H1 (cell line): ENCODE measurements at regions of chr3 and their contacts with region 1.

Region 1: DNA sequence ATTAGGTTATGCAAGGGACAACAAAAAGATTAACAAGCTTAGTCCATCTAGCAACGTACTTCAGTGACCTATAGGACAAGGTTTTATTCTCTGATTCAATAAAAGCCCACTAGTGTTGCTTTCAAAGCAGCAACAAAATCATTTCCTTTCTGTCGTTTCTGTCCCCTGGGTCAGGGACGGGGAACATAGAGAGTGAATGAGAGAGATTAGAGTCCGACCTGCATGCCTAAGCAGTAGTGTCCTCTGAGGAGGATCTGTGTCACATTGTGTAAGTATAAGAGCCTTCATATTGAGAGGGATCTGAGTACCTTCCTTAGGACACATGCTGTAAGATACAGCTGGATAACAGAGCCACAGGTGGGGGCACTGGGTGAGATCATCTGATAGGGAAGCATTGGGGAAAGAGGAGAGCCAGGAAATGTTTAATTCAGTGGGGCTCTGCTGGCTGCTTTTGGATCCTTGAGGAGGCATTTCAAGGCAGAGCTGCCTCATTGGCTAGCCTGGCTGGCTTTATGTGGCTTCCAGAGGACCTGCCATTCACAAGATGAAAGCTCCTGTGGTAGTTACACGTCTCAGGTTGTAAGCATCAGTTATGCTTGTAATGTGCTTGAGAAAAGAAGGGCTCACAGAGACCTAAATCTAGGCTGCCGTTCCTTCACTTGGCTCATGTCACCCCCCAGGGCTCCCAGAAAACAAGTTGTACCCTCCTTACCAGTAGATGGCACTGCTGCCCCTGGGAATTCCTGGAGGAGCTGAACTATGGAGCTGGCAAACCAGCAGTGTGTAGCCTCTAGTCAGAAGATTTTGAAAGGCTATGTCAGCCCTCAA is 2.7 kb downstream of the TMEM108 start:
- DNase-seq: peak; percentile 47 to 87
- H3K4me3 ChIP-seq: no peak overlapping the region
- H3K27ac ChIP-seq: no peak overlapping the region
- H3K4me1 ChIP-seq: peaks cover 0 to 8% (median 7%) of the 10 kb centered on the region in 4 experiments; a peak in 4 of 7 replicates
- H3K27me3 ChIP-seq: peaks cover 0 to 18% (median 9%) of the 10 kb centered on the region in 4 experiments; a peak in 5 of 7 replicates
- CTCF ChIP-seq: peak; percentile 60 to 92 (median 89)
- EP300 ChIP-seq: no peak
- POLR2A ChIP-seq: no peak
- RAD21 ChIP-seq: peak; percentile 96 to 97

Region 2: GRCh38 chr3:133054571-133054970 is 13.7 kb after region 1 on chr3:
- CTCF ChIA-PET with region 1: interaction called, 28 read pairs
- POLR2A ChIA-PET with region 1: no interaction called
- DNase-seq: no peak
- H3K4me3 ChIP-seq: no peak overlapping the region
- H3K27ac ChIP-seq: no peak overlapping the region; the same call in 1 of the 2 replicates
- H3K4me1 ChIP-seq: peaks cover 0 to 7% (median 5%) of the 10 kb centered on the region in 4 experiments; a peak in 4 of 7 replicates
- H3K27me3 ChIP-seq: no peaks in the 10 kb centered on the region
- CTCF ChIP-seq: no peak
- EP300 ChIP-seq: no peak
- POLR2A ChIP-seq: no peak
- RAD21 ChIP-seq: no peak

Region 3: DNA sequence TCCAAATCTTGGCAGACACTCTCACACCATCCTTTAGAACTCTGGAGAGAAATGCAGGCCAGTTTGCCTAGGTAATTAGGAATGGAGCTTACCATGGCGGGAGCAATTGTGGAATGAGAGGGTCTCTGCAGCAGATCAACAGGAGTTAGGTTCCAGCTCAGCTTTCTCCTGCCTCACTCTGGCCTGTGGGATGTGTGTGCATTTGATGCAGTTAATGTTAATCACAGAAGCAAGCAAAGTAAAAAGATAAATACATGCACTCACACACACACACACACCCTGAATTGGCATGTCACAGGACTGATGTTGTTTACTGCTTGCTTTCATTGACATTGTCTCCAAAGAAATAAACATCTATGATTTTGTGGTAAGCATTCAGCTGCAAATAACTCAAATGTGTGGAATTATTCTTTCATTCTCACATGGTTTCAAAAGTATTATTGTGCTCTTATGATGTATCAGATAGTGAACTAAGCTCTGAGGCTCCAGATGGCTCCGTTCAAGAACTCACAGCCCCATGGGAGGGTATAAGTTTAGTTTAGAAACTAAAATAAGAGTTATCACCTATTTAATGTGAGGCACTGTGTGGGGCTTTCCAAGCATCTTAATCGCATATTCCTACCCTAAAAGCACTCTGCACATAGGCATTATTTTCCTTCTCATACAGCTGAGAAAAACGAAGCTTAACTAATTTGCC is 327.6 kb after region 1 on chr3:
- CTCF ChIA-PET with region 1: interaction called, 28 read pairs
- POLR2A ChIA-PET with region 1: no interaction called
- DNase-seq: peak in 1 of 2 experiments; percentile 6
- H3K4me3 ChIP-seq: no peak overlapping the region
- H3K27ac ChIP-seq: no peak overlapping the region
- H3K4me1 ChIP-seq: no peaks in the 10 kb centered on the region
- H3K27me3 ChIP-seq: peaks cover 0 to 1% (median 0%) of the 10 kb centered on the region in 4 experiments; a peak in 1 of 7 replicates
- CTCF ChIP-seq: no peak
- EP300 ChIP-seq: no peak
- POLR2A ChIP-seq: no peak
- RAD21 ChIP-seq: no peak

Region 4: GRCh38 chr3:133384331-133385027 is 343.6 kb after region 1 on chr3:
- CTCF ChIA-PET with region 1: interaction called, 173 read pairs
- POLR2A ChIA-PET with region 1: interaction called, 5 read pairs
- DNase-seq: peak; percentile 58 to 80
- H3K4me3 ChIP-seq: no peak overlapping the region
- H3K27ac ChIP-seq: no peak overlapping the region
- H3K4me1 ChIP-seq: no peaks in the 10 kb centered on the region; a peak in 1 of 7 replicates
- H3K27me3 ChIP-seq: no peaks in the 10 kb centered on the region
- CTCF ChIP-seq: peak; percentile 86 to 97 (median 93)
- EP300 ChIP-seq: no peak
- POLR2A ChIP-seq: no peak
- RAD21 ChIP-seq: peak; percentile 97 to 98

Region 5: DNA sequence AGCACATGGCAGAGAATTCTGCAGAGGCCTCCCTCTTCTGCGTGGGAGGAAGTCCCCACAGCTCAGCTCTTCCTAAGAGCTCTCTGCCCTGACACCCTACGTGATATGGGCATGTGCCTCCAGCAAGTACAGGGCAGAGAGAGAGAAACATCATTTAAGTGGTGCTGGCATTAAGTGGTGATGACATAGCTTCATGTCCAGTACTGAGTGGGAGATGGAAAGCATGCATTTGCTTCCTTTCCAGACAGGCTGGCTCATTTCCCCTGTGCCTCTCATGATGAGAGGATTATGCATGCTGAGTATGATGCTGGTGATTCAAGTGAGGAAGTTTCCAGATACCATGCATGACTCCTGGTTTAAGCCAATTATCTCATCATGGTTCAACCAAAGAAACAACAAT is 385.8 kb after region 1 on chr3:
- CTCF ChIA-PET with region 1: interaction called, 14 read pairs
- POLR2A ChIA-PET with region 1: no interaction called
- DNase-seq: no peak
- H3K4me3 ChIP-seq: no peak overlapping the region
- H3K27ac ChIP-seq: no peak overlapping the region
- H3K4me1 ChIP-seq: no peaks in the 10 kb centered on the region
- H3K27me3 ChIP-seq: no peaks in the 10 kb centered on the region
- CTCF ChIP-seq: no peak
- EP300 ChIP-seq: no peak
- POLR2A ChIP-seq: no peak
- RAD21 ChIP-seq: no peak